CD8-positive, alpha-beta T cell (primary cell): ENCODE measurements at regions of chr6 and their contacts with region 1.

Region 1: GRCh38 chr6:154229786-154230185 is 126.8 kb downstream of the IPCEF1 start:
- DNase-seq: peak in 2 of 9 experiments; percentile 53 to 76
- ATAC-seq: peak; percentile 64
- H3K4me3 ChIP-seq: peak overlapping the region; percentile 11 to 47
- H3K4me3 Mint-ChIP-seq: peak overlapping the region; percentile 85
- H3K27ac ChIP-seq: peak overlapping the region; percentile 19 to 61
- H3K27ac Mint-ChIP-seq: peak overlapping the region; percentile 91
- H3K4me1 ChIP-seq: peaks cover 61% of the 10 kb centered on the region
- H3K4me1 Mint-ChIP-seq: peaks cover 85% of the 10 kb centered on the region
- H3K27me3 ChIP-seq: no peaks in the 10 kb centered on the region
- H3K27me3 Mint-ChIP-seq: no peaks in the 10 kb centered on the region
- CTCF ChIP-seq: no peak

Region 2: GRCh38 chr6:154041001-154041400 is 188.8 kb before region 1 on chr6:
- CTCF ChIA-PET with region 1: no interaction called
- POLR2A ChIA-PET with region 1: no interaction called
- intact Hi-C with region 1: no loop called
- DNase-seq: no peak
- ATAC-seq: no peak
- H3K4me3 ChIP-seq: no peak overlapping the region
- H3K4me3 Mint-ChIP-seq: no peak overlapping the region
- H3K27ac ChIP-seq: no peak overlapping the region
- H3K27ac Mint-ChIP-seq: no peak overlapping the region
- H3K4me1 ChIP-seq: no peaks in the 10 kb centered on the region
- H3K4me1 Mint-ChIP-seq: no peaks in the 10 kb centered on the region
- H3K27me3 ChIP-seq: peaks cover 3 to 4% of the 10 kb centered on the region in 2 experiments
- H3K27me3 Mint-ChIP-seq: peaks cover 28% of the 10 kb centered on the region
- CTCF ChIP-seq: no peak

Region 3: DNA sequence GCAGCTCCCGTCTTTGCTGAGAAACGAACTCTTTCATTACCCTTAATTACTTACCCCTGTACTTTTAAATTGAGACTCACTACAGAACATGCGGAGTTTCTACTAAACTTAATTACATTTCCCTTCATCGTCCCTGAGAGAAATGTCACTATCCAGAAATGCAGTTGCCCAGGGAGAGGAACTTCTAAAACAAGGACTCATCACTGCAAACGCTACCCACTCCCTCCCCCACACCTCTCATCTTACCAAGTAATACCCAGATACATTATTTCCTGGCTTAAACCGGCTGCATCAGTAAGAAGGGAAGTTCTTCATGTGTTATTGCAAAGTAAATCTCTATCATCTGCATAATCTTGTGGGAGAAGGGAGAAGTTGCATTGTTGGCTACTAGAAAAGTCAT is 11.5 kb before region 1 on chr6:
- CTCF ChIA-PET with region 1: interaction called, 7 read pairs
- POLR2A ChIA-PET with region 1: interaction called, 9 read pairs
- intact Hi-C with region 1: loop called in 1 of 2 experiments (anchors 1 kb)
- DNase-seq: peak in 1 of 9 experiments; percentile 24
- ATAC-seq: peak; percentile 44
- H3K4me3 ChIP-seq: no peak overlapping the region
- H3K4me3 Mint-ChIP-seq: peak overlapping the region; percentile 44
- H3K27ac ChIP-seq: peak overlapping the region in 1 of 2 experiments; percentile 27
- H3K27ac Mint-ChIP-seq: peak overlapping the region; percentile 88
- H3K4me1 ChIP-seq: peaks cover 44% of the 10 kb centered on the region
- H3K4me1 Mint-ChIP-seq: peaks cover 66% of the 10 kb centered on the region
- H3K27me3 ChIP-seq: no peaks in the 10 kb centered on the region
- H3K27me3 Mint-ChIP-seq: no peaks in the 10 kb centered on the region
- CTCF ChIP-seq: no peak

Region 4: DNA sequence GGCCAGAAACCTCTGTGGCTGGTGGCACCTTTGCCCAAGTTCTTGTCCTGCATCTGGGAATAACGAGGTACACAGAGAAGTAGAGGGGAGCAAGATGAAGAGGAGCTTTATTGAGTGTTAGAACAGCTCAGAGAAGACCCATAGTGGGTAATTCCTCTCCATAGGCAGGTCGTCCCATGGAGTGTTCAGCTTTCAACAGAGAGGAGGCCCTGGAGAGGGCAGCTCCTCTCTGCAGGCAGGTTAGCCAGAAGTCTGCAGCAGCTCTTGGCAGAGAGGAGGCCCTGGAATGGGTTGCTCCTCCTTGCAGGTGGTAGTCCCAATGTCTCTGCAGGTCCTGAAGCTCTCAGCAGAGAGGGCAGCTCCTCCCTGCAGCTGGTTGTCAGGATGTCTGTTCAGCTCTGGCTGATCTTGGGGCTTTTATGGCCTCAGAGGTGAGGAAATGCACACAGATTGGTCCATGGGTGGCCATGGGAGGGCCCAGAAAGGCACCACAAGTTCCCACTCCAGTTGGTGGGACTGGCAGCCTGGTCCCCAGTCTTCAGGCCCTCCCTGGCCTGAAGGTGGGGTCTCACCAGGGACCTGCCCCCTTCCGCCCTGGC is 37.8 kb after region 1 on chr6:
- CTCF ChIA-PET with region 1: no interaction called
- POLR2A ChIA-PET with region 1: interaction called, 3 read pairs
- intact Hi-C with region 1: loop called in 1 of 2 experiments (anchors 2 kb)
- DNase-seq: peak in 2 of 9 experiments; percentile 29 to 41
- ATAC-seq: peak; percentile 59
- H3K4me3 ChIP-seq: no peak overlapping the region
- H3K4me3 Mint-ChIP-seq: peak overlapping the region; percentile 59
- H3K27ac ChIP-seq: no peak overlapping the region
- H3K27ac Mint-ChIP-seq: peak overlapping the region; percentile 79
- H3K4me1 ChIP-seq: peaks cover 20% of the 10 kb centered on the region
- H3K4me1 Mint-ChIP-seq: peaks cover 28% of the 10 kb centered on the region
- H3K27me3 ChIP-seq: no peaks in the 10 kb centered on the region
- H3K27me3 Mint-ChIP-seq: no peaks in the 10 kb centered on the region
- CTCF ChIP-seq: no peak